ENCODE measurements at regions of chr4 and their contacts with region 1.

Region 1: GRCh38 chr4:11587797-11588196 is 159.1 kb upstream of the HS3ST1 start:
- DNase-seq: no peak
- ATAC-seq: peak; percentile 76
- H3K4me3 ChIP-seq: no peak overlapping the region
- H3K27ac ChIP-seq: no peak overlapping the region
- H3K4me1 ChIP-seq: no peaks in the 10 kb centered on the region
- H3K27me3 ChIP-seq: no peaks in the 10 kb centered on the region
- CTCF ChIP-seq: no peak
- EP300 ChIP-seq: peak in 1 of 2 experiments; percentile 10; a peak in 1 of 4 replicates
- POLR2A ChIP-seq: no peak
- RAD21 ChIP-seq: no peak

Region 2: DNA sequence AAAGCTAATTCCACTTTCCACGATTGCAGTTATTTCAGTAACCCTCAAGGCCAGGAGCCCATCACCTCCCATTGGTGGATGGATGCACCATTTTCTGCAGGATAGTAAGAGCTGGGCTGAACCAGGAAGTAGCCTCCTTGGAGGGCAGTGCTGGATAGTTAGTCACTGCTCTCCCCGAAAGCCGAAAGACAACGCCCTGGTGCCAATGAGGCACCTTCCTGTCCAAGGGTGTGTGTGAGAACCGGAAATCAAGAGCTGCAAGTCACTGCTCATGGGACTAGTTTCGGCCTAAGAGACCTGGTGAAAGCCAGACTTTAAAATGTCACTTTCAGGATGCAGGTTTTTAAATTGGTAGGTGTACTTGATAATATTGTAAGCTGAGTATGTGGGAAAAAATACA is 44.7 kb after region 1 on chr4:
- CTCF ChIA-PET with region 1: no interaction called
- POLR2A ChIA-PET with region 1: no interaction called
- RAD21 ChIA-PET with region 1: no interaction called
- SMC1A ChIA-PET with region 1: no interaction called
- in situ Hi-C with region 1: no loop called
- intact Hi-C with region 1: loop called (anchors 1 kb)
- DNase-seq: no peak
- ATAC-seq: no peak
- H3K4me3 ChIP-seq: no peak overlapping the region
- H3K27ac ChIP-seq: no peak overlapping the region
- H3K4me1 ChIP-seq: no peaks in the 10 kb centered on the region
- H3K27me3 ChIP-seq: no peaks in the 10 kb centered on the region
- CTCF ChIP-seq: no peak
- EP300 ChIP-seq: no peak
- POLR2A ChIP-seq: no peak
- RAD21 ChIP-seq: no peak